Sigmoid colon (tissue), 7 donors: ENCODE measurements at regions of chr5 and their contacts with region 1.

Region 1: GRCh38 chr5:157312492-157312891 is 46.6 kb downstream of the CYFIP2 start:
- DNase-seq: no peak
- H3K4me3 ChIP-seq: no peak overlapping the region
- H3K27ac ChIP-seq: no peak overlapping the region
- H3K4me1 ChIP-seq: no peaks in the 10 kb centered on the region
- H3K27me3 ChIP-seq: no peaks in the 10 kb centered on the region
- CTCF ChIP-seq: peak in 3 of 4 experiments; percentile 48 to 68 (median 58)
- EP300 ChIP-seq: no peak
- POLR2A ChIP-seq: no peak

Region 2: DNA sequence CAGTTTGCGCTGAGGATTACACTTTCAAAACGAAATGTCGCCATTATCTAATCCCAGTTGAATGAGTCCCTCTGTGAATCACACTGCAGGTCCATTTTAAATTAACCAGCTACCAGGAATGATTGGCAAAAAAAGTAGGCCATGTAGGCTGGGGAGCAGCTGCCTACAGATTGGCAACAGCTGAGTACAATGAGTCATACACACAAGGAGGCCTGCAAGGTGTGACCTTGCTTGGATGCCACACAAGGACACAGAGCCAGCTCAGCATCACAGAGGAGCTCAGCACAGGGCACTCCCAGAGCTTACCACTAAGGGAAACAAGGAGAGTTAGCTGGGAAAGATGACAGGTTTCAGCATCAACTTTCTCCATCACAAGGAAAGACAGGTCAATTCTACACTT is 266.5 kb before region 1 on chr5:
- intact Hi-C with region 1: no loop called
- DNase-seq: no peak
- H3K4me3 ChIP-seq: no peak overlapping the region
- H3K27ac ChIP-seq: no peak overlapping the region
- H3K4me1 ChIP-seq: no peaks in the 10 kb centered on the region
- H3K27me3 ChIP-seq: no peaks in the 10 kb centered on the region
- CTCF ChIP-seq: no peak
- EP300 ChIP-seq: no peak
- POLR2A ChIP-seq: no peak

Region 3: GRCh38 chr5:157148734-157149615 is 163.5 kb before region 1 on chr5:
- intact Hi-C with region 1: loop called (anchors 5 kb)
- DNase-seq: no peak
- H3K4me3 ChIP-seq: no peak overlapping the region
- H3K27ac ChIP-seq: no peak overlapping the region
- H3K4me1 ChIP-seq: peaks cover 0 to under 1% (median 0%) of the 10 kb centered on the region in 4 donors
- H3K27me3 ChIP-seq: no peaks in the 10 kb centered on the region
- CTCF ChIP-seq: peak; percentile 25 to 81 (median 62)
- EP300 ChIP-seq: no peak
- POLR2A ChIP-seq: no peak

Region 4: DNA sequence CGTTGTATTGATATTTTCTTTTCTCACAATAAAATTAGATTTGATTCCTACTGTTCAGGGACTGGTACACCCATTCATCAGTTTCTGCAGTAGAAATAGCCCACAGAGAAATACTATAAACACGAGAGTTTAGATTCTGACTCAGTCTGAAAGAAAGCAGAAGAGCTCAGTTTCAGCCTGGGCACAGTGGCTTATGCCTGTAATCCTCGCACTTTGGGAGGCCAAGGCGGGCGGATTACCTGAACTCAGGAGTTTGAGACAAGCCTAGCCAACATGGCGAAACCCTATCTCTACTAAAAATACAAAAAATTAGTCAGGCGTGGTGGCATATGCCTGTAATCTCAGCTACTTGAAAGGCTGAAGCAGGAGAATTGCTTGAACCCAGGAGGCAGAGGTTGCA is 123.3 kb before region 1 on chr5:
- intact Hi-C with region 1: no loop called
- DNase-seq: no peak
- H3K4me3 ChIP-seq: no peak overlapping the region
- H3K27ac ChIP-seq: no peak overlapping the region
- H3K4me1 ChIP-seq: no peaks in the 10 kb centered on the region
- H3K27me3 ChIP-seq: peaks cover 0 to 4% (median 0%) of the 10 kb centered on the region in 3 donors
- CTCF ChIP-seq: no peak
- EP300 ChIP-seq: no peak
- POLR2A ChIP-seq: no peak

Region 5: GRCh38 chr5:157624144-157624543 is 311.7 kb after region 1 on chr5:
- intact Hi-C with region 1: no loop called
- DNase-seq: no peak
- H3K4me3 ChIP-seq: no peak overlapping the region
- H3K27ac ChIP-seq: no peak overlapping the region
- H3K4me1 ChIP-seq: no peaks in the 10 kb centered on the region
- H3K27me3 ChIP-seq: no peaks in the 10 kb centered on the region
- CTCF ChIP-seq: no peak
- EP300 ChIP-seq: no peak
- POLR2A ChIP-seq: no peak

Region 6: DNA sequence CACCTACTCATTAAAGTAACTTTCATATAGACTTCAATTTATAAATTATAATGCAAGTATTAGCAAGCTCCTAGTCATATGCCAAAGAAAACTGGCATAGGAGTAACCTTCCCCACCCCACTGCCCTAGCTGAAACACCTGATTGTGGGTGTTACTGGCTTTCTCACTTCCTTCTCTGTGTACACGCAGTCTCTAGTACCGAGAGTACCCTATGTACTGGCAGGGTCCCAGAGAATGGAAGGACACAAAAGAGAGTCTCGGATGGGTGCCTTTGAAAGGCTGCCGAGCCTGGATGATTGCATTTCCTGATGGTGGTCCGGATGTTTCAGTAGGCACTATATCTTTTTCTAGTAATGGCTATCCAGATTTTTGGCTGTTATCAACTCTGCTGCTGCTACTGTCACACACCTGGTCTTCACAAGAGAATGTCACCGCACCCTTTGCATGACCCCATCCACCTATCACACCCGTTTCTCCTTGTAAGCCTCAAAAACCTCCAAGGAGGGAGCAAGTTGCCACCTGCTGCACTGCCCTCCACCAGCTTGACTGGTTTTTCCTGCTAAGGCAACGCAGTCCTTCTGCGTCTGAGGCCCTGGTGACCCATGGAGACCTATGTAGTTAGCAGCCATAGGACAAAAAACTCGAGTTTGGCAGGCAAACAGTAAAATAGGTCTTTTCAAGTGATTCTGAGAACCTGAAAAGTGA is 600.3 kb after region 1 on chr5:
- intact Hi-C with region 1: no loop called
- DNase-seq: no peak
- H3K4me3 ChIP-seq: no peak overlapping the region
- H3K27ac ChIP-seq: no peak overlapping the region
- H3K4me1 ChIP-seq: peaks cover 0 to 25% (median 13%) of the 10 kb centered on the region in 4 donors
- H3K27me3 ChIP-seq: no peaks in the 10 kb centered on the region
- CTCF ChIP-seq: no peak
- EP300 ChIP-seq: no peak
- POLR2A ChIP-seq: no peak